BJ (cell line): ENCODE measurements at regions of chr5 and their contacts with region 1.

Region 1: GRCh38 chr5:73464016-73464745 is 15.6 kb upstream of the FOXD1 start:
- DNase-seq: peak; percentile 43
- H3K4me3 ChIP-seq: no peak overlapping the region
- H3K27me3 ChIP-seq: 0 out of 2 replicates have a peak, but pooled peaks cover 1% of the 10 kb centered on the region
- CTCF ChIP-seq: no peak

Region 2: DNA sequence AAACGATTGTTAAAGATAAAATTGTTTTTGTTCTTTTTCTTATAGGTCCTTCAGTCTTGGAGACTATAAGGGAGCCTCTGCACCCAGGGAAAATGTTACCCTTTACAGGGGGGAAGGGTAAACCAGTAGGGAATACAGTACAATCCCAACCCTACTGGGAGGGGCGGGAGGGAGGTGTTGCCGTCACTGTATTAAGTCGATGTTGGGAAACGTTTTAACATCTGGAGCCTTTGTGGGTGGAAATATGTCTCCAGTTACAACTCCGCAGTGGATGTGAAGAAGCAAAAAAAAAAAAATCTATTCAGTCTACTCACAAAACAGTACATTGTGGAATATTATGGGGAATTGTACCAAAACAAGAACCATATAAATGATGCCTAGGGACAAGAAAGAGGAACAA is 555.5 kb before region 1 on chr5:
- CTCF ChIA-PET with region 1: no interaction called
- POLR2A ChIA-PET with region 1: no interaction called
- DNase-seq: peak; percentile 18
- H3K4me3 ChIP-seq: no peak overlapping the region
- H3K27me3 ChIP-seq: no peaks in the 10 kb centered on the region
- CTCF ChIP-seq: no peak

Region 3: GRCh38 chr5:73160239-73160671 is 303.9 kb before region 1 on chr5:
- CTCF ChIA-PET with region 1: no interaction called
- POLR2A ChIA-PET with region 1: interaction called, 16 read pairs
- DNase-seq: no peak
- H3K4me3 ChIP-seq: no peak overlapping the region
- H3K27me3 ChIP-seq: peaks cover 2% of the 10 kb centered on the region; the same call in 1 of the 2 replicates
- CTCF ChIP-seq: no peak

Region 4: GRCh38 chr5:73183481-73183891 is 280.7 kb before region 1 on chr5:
- CTCF ChIA-PET with region 1: no interaction called
- POLR2A ChIA-PET with region 1: no interaction called
- DNase-seq: no peak
- H3K4me3 ChIP-seq: no peak overlapping the region
- H3K27me3 ChIP-seq: peaks cover 2% of the 10 kb centered on the region
- CTCF ChIP-seq: no peak

Region 5: DNA sequence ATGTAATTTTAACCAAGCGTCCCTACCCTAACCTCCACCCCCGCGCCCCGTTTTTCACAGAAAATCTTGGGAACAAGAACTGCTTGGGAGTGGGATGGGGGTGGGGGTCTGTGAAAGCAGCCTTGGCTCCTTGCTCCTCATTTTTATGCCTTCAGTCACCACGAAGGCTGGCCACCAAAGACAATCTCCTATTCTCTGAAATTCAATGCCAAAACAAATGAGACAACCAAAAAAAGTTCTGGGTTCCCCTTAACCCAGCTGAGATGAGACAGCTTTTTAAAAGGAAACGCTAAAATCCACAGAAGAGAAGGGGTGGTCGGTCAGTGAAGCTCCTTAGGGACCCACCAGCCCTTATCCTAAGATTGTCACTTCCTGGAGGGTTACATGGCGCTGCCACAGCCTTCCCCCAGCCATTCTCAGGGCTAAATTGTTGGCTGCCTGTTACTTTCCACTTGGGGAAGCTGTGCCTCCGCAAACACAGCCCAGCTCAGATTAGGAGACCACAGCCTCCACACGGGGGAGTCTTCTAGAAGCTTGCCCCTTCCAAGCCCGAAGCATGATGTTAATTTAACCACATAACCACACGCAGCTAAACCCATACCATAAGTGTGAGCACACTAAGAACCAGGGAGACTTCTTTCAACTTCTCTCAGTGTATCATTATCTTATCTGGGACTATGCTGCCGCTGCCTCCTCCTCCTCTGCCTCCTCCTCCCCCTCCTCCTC is 151.9 kb before region 1 on chr5:
- CTCF ChIA-PET with region 1: no interaction called
- POLR2A ChIA-PET with region 1: interaction called, 12 read pairs
- DNase-seq: no peak
- H3K4me3 ChIP-seq: no peak overlapping the region
- H3K27me3 ChIP-seq: no peaks in the 10 kb centered on the region
- CTCF ChIP-seq: peak; percentile 60

Region 6: GRCh38 chr5:73437101-73437776 is 26.9 kb before region 1 on chr5:
- CTCF ChIA-PET with region 1: no interaction called
- POLR2A ChIA-PET with region 1: no interaction called
- DNase-seq: no peak
- H3K4me3 ChIP-seq: peak overlapping the region; percentile 25
- H3K27me3 ChIP-seq: no peaks in the 10 kb centered on the region
- CTCF ChIP-seq: peak; percentile 52

Region 7: DNA sequence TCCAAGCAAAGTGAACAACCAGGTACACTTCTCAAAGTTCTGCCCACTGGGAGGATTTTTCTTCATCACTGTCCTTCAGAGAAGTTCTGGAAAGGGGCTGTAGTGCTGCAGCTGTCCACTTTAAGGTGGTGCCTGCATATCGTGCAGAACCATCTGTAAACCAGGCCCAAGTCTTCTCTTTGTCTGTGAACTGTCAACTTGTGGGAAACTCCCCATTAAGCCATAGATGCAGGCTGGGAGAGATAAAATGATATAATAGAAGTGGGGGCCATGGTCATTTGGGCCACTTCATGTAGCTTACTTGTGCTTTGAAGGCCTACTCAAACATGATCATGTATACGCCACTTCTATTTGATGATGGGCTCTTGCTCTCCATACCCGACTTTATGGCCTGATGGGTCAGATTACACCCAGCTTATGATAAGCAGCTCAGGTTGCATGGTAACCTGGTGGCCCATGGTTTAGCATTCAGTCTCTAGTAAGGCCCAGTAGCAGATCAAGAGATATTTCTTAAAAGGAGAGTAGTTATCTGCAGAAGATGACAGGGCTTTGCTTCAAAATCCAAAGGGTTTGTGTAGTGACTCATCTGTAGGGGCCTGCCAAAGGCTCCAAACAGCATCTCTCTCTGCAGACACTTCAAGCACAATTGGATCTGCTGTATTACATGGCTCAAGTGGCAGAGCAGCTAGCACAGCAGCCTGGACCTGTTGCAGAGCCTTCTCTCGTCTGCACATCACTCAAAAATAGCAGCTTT is 18.4 kb after region 1 on chr5:
- CTCF ChIA-PET with region 1: no interaction called
- POLR2A ChIA-PET with region 1: interaction called, 10 read pairs
- DNase-seq: no peak
- H3K4me3 ChIP-seq: no peak overlapping the region
- H3K27me3 ChIP-seq: peaks cover 2% of the 10 kb centered on the region; the same call in 1 of the 2 replicates
- CTCF ChIP-seq: no peak

Region 8: DNA sequence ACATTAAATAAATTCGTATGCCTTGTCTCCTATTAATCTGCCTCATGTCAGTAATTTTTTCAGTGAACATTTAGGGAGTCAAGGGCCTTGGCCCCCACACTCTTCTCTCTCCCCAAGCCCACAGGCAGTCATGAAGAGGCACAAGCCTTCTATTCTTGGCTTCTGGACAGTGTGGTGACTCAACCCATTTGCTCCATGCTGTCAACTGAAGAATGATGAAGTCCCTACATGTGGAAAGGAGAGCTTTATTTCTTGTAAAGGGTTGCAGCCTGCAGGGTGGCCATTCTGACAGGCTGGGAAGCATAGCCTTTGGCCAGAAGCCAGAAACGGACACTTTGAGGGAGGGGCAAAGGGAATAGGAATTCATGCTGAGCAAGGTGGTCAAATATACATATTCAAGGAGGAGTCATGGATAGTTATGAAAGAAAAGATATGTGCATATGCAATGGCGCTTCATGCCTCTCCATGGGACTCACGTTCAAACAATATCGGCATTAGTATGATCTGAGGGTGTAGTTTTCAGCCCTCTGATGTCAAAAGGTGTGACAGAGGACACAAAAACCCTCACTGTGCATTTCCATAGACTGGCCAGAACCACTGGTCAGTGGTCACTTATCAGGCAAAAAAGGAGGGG is 69.9 kb after region 1 on chr5:
- CTCF ChIA-PET with region 1: no interaction called
- POLR2A ChIA-PET with region 1: no interaction called
- DNase-seq: no peak
- H3K4me3 ChIP-seq: no peak overlapping the region
- H3K27me3 ChIP-seq: no peaks in the 10 kb centered on the region
- CTCF ChIP-seq: no peak